Esophagus muscularis mucosa (tissue), 4 donors: ENCODE measurements at regions of chr2 and their contacts with region 1.

Region 1: GRCh38 chr2:157876066-157876787 is at the start of gene ACVR1:
- DNase-seq: peak; percentile 98
- H3K4me3 ChIP-seq: peak within 1 kb of the TSS; percentile 79 to 93 (median 90)
- H3K27ac ChIP-seq: peak within 1 kb of the TSS; percentile 94 to 98 (median 96)
- H3K4me1 ChIP-seq: peaks cover 16 to 49% (median 46%) of the 10 kb centered on the region in 4 donors
- H3K27me3 ChIP-seq: no peaks in the 10 kb centered on the region
- CTCF ChIP-seq: peak; percentile 14 to 53 (median 40)
- EP300 ChIP-seq: no peak
- POLR2A ChIP-seq: peak; percentile 55
- total RNA-seq, gene ACVR1: 25.2 to 39.1 (median 32.3) TPM

Region 2: DNA sequence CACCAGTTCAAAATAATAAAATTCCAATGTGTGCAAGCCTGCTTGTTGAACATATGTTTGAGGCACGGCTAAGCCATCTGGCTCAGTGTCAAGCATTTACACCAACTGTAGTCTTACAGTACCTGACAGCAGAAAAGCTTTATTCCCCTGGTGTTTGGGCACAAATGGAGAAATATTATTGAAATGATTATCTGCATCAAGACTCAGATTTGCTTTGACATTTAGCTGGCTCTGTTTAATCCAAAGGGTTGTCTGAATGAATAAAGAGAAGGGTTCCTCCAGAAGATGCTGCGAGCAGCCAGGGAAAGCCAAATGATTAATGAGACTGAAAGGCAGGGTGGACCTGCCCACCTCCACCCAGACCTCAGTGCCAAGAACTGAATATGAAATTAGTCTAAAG is 1011.9 kb before region 1 on chr2:
- intact Hi-C with region 1: no loop called
- DNase-seq: no peak
- H3K4me3 ChIP-seq: no peak overlapping the region
- H3K27ac ChIP-seq: no peak overlapping the region
- H3K4me1 ChIP-seq: peaks cover 0 to 12% (median 4%) of the 10 kb centered on the region in 4 donors
- H3K27me3 ChIP-seq: no peaks in the 10 kb centered on the region
- CTCF ChIP-seq: no peak
- EP300 ChIP-seq: no peak
- POLR2A ChIP-seq: no peak

Region 3: DNA sequence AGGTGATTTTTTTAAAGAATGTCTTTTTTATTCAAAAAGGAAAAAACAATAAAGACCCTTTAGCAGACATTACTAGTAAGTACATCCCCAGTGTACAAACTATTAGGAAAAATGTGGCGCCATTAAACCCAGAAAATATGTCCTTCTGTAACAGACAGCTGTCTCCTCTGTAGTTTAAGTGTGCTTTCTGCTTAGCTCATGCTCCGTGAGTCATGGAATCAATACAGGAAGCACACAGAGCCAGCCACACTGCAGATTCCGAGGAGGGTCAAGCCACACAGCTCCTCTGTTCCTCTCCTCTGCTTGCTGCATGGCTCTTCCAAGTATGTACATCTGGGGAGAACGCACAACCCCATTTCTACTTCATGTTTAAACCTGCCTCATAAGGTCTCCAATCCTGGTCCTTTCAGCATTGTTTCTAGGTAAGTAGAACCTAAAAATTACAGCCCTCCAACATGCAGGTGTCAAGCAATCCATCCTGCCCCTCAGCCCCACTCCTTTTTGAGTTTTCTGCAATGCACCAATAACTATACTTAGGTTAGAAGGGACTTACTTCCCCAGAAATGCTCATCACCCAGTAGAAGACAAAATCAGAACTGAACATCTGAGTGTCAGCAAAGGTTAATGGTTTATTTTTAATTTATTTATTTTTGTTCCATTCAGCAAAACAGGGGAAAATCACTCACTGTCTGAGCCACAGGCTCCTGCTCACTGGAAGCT is 37.6 kb before region 1 on chr2:
- intact Hi-C with region 1: loop called (anchors 5 kb)
- DNase-seq: peak; percentile 86
- H3K4me3 ChIP-seq: peak overlapping the region; percentile 33 to 47 (median 46)
- H3K27ac ChIP-seq: peak overlapping the region; percentile 62 to 67 (median 66)
- H3K4me1 ChIP-seq: peaks cover 59 to 65% (median 63%) of the 10 kb centered on the region in 4 donors
- H3K27me3 ChIP-seq: no peaks in the 10 kb centered on the region
- CTCF ChIP-seq: no peak
- EP300 ChIP-seq: no peak
- POLR2A ChIP-seq: no peak